ENCODE measurements at regions of chr7 and their contacts with region 1.

Region 1: GRCh38 chr7:37352974-37353948 is 95.4 kb downstream of the ELMO1 start:
- DNase-seq: peak; percentile 92
- H3K4me3 Mint-ChIP-seq: peak overlapping the region; percentile 92
- H3K27ac Mint-ChIP-seq: peak overlapping the region; percentile 94
- H3K4me1 Mint-ChIP-seq: peaks cover 73% of the 10 kb centered on the region
- H3K27me3 Mint-ChIP-seq: no peaks in the 10 kb centered on the region

Region 2: GRCh38 chr7:36967387-36967786 is 385.9 kb before region 1 on chr7:
- intact Hi-C with region 1: loop called (anchors 10 kb)
- DNase-seq: no peak
- H3K4me3 Mint-ChIP-seq: no peak overlapping the region
- H3K27ac Mint-ChIP-seq: no peak overlapping the region
- H3K4me1 Mint-ChIP-seq: peaks cover 35% of the 10 kb centered on the region
- H3K27me3 Mint-ChIP-seq: no peaks in the 10 kb centered on the region

Region 3: GRCh38 chr7:37234928-37235327 is 118.3 kb before region 1 on chr7:
- intact Hi-C with region 1: loop called (anchors 2 kb)
- DNase-seq: no peak
- H3K4me3 Mint-ChIP-seq: no peak overlapping the region
- H3K27ac Mint-ChIP-seq: no peak overlapping the region
- H3K4me1 Mint-ChIP-seq: peaks cover 10% of the 10 kb centered on the region
- H3K27me3 Mint-ChIP-seq: no peaks in the 10 kb centered on the region

Region 4: DNA sequence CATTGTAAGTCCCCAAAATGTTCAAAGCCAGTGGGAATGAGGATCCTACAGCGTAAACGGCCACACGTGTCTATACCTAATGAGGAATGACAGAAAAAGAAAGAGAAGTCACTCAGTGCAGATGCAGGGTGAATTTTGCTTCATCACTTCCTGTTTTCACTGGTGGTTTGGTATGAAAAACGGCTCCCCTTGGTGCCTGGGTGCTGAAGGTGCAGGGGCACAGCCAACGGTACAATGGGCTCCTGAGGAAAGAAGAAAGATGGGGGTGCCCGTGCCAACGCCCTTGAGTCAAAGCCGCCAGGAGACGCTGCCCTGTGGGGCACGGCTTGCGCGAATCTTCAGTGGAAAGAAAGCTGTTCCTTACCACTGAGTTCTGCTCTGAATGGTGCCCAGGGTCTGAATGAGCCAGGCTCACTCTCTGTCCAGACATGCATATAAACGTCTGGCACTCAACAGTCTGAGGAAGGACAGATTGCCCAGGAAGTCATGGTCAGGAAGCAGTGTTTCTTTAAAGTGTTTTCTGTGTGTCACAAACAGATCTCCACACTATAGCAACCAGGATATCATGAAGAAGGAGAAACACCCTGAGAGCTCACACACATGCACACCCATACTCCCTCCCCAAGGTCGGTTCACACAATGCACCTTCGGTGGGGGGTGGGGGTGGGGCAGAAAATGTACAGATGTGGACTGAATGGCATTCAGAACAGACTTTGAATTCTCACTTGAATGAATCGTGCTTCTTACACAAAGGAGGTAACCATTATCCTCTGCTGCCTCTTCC is 10.4 kb before region 1 on chr7:
- intact Hi-C with region 1: loop called (anchors 1 kb)
- DNase-seq: peak; percentile 89
- H3K4me3 Mint-ChIP-seq: peak overlapping the region; percentile 92
- H3K27ac Mint-ChIP-seq: peak overlapping the region; percentile 99
- H3K4me1 Mint-ChIP-seq: peaks cover 61% of the 10 kb centered on the region
- H3K27me3 Mint-ChIP-seq: no peaks in the 10 kb centered on the region

Region 5: DNA sequence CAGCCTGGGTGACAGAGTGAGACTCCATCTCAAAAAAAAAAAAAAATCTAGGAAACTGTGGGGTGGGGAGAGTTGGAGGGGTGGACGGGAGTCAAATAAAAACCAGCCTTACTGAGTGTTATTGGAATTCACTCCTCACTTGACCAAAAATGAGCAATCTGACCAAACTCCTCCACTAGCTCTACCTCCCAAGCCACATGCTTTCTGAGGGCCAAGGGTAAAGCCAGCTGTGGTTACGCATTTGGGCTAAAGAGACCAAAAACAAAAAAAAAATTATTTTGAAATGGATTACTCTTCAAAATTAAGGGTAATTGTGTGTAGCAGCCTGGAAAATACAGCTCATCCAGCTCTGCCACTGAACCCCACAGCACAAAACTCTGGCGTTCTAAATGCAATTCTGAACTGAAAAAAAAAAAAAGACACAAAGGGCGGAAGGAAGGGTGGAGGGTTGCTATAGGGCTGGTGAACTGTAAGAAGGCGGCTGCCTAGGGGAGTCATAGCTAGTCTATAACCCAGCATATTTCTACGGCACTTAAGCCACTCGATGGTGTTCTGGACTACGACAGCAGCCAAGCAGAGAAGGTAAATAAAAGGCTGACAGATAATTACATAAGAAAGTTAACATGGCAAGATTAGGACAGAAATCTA is 87.6 kb after region 1 on chr7:
- intact Hi-C with region 1: loop called (anchors 1 kb)
- DNase-seq: peak; percentile 80
- H3K4me3 Mint-ChIP-seq: peak overlapping the region; percentile 68
- H3K27ac Mint-ChIP-seq: peak overlapping the region; percentile 85
- H3K4me1 Mint-ChIP-seq: peaks cover 51% of the 10 kb centered on the region
- H3K27me3 Mint-ChIP-seq: no peaks in the 10 kb centered on the region

Region 6: GRCh38 chr7:38178004-38178694 is 824.9 kb after region 1 on chr7 and contains the start of gene STARD3NL:
- intact Hi-C with region 1: no loop called
- DNase-seq: peak; percentile 97
- H3K4me3 Mint-ChIP-seq: peak within 1 kb of the TSS; percentile 97
- H3K27ac Mint-ChIP-seq: peak within 1 kb of the TSS; percentile 92
- H3K4me1 Mint-ChIP-seq: peaks cover 34% of the 10 kb centered on the region
- H3K27me3 Mint-ChIP-seq: peaks cover 11% of the 10 kb centered on the region
- total RNA-seq, gene STARD3NL: 27.1 and 27.5 TPM in 2 replicates

Measured in activated CD4-positive, alpha-beta T cell treated with anti-CD3 and anti-CD28 coated beads, Interleukin-2, amount 10 ng/mL, durations not matched to agents 24 days and 14 days (primary cell).